ENCODE measurements at regions of chr19 and their contacts with region 1.

Region 1: DNA sequence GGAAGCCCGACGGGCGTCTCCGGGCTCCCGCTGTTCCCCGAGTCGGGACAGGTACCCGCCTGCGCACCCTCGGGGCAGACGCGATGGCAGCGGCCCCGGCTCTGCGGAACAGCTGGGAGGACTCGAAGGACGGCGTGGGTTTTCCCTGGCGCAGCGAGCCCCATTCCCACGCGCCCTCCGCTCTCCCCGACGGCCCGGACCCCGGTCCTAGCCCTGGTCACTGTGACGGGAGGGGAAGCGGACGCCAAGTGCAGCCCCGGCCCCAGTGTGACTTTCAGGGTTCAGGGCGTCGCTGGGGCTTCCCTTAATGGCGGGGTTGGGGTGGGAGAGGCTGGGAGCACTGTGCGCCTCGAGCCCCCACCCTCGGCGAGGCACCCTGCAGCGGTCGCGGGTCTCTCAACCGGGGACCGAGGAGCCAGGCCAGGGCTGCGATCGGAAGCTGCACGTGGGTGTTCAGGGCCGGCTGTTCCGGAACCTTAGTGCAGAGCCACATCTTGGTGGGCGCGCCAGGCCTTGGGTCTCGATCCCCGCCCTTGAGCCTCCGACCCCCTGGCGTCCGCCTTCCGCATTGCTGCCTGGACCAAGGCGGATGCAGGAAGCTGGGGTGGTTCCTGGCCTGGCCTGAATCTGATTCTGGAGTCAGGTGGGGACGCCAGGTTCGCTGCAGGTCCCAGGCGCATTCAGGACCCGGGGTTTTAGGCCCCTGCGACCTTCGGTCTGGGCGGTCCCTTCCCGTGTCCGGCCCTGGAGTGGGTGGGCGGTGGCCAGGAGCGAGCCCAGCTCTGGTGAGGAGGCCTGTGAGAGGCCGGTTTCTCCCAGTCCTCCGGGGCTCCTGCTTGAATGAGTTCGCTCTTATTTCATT is 3.5 kb downstream of the LGALS7B start:
- DNase-seq: no peak
- ATAC-seq: peak; percentile 22

Region 2: GRCh38 chr19:40609561-40610395 is 1817.3 kb after region 1 on chr19:
- intact Hi-C with region 1: loop called (anchors 5 kb)
- DNase-seq: peak; percentile 94
- ATAC-seq: peak; percentile 63

Measured in sciatic nerve (tissue), 2 donors.